CD14-positive monocyte (primary cell): ENCODE measurements at regions of chr15 and their contacts with region 1.

Region 1: GRCh38 chr15:73704869-73705645 is 20.9 kb downstream of the CD276 start:
- DNase-seq: peak; percentile 43 to 58 (median 44)
- H3K4me3 ChIP-seq: no peak overlapping the region
- H3K4me3 Mint-ChIP-seq: no peak overlapping the region
- H3K27ac ChIP-seq: no peak overlapping the region
- H3K27ac Mint-ChIP-seq: no peak overlapping the region
- H3K4me1 ChIP-seq: no peaks in the 10 kb centered on the region
- H3K4me1 Mint-ChIP-seq: peaks cover 2% of the 10 kb centered on the region
- H3K27me3 ChIP-seq: no peaks in the 10 kb centered on the region
- H3K27me3 Mint-ChIP-seq: peaks cover 11 to 21% (median 13%) of the 10 kb centered on the region in 3 donors
- CTCF ChIP-seq: peak; percentile 79

Region 2: GRCh38 chr15:73284090-73284716 is 420.9 kb before region 1 on chr15:
- intact Hi-C with region 1: loop called (anchors 2 to 5 kb)
- DNase-seq: peak in 2 of 3 donors; percentile 36 to 51
- H3K4me3 ChIP-seq: no peak overlapping the region
- H3K4me3 Mint-ChIP-seq: no peak overlapping the region
- H3K27ac ChIP-seq: no peak overlapping the region
- H3K27ac Mint-ChIP-seq: no peak overlapping the region
- H3K4me1 ChIP-seq: peaks cover 42 to 43% of the 10 kb centered on the region in 2 donors
- H3K4me1 Mint-ChIP-seq: peaks cover 43% of the 10 kb centered on the region
- H3K27me3 ChIP-seq: peaks cover 0 to 4% of the 10 kb centered on the region in 2 donors
- H3K27me3 Mint-ChIP-seq: peaks cover 6 to 15% (median 13%) of the 10 kb centered on the region in 3 donors
- CTCF ChIP-seq: peak; percentile 80